ENCODE measurements at regions of chr16 and their contacts with region 1.

Region 1: GRCh38 chr16:508884-509736 is 18.4 kb upstream of the CAPN15 start:
- DNase-seq: peak; percentile 96
- ATAC-seq: peak; percentile 95
- H3K4me3 ChIP-seq: peak overlapping the region in 1 of 3 experiments; percentile 11; a peak in 1 of 6 replicates
- H3K27ac ChIP-seq: peak overlapping the region; percentile 73
- H3K4me1 ChIP-seq: peaks cover 37% of the 10 kb centered on the region
- H3K27me3 ChIP-seq: no peaks in the 10 kb centered on the region
- CTCF ChIP-seq: no peak
- EP300 ChIP-seq: peak in 1 of 2 experiments; percentile 80; a peak in 2 of 4 replicates
- POLR2A ChIP-seq: peak; percentile 35 to 62; a peak in 2 of 4 replicates
- RAD21 ChIP-seq: peak; percentile 37; the same call in 1 of the 2 replicates

Region 2: GRCh38 chr16:521381-522210 is 12.5 kb after region 1 on chr16:
- CTCF ChIA-PET with region 1: no interaction called
- POLR2A ChIA-PET with region 1: interaction called, 20 read pairs
- in situ Hi-C with region 1: no loop called
- intact Hi-C with region 1: no loop called
- DNase-seq: no peak
- ATAC-seq: no peak
- H3K4me3 ChIP-seq: no peak overlapping the region
- H3K27ac ChIP-seq: no peak overlapping the region
- H3K4me1 ChIP-seq: peaks cover 28% of the 10 kb centered on the region
- H3K27me3 ChIP-seq: no peaks in the 10 kb centered on the region; a peak in 1 of 5 replicates
- CTCF ChIP-seq: 0 out of 2 replicates have a peak, but pooled peaks have one; percentile 19
- EP300 ChIP-seq: no peak
- POLR2A ChIP-seq: 0 out of 4 replicates have a peak, but pooled peaks of 1 of the 2 experiments have one; percentile 8
- RAD21 ChIP-seq: no peak

Region 3: DNA sequence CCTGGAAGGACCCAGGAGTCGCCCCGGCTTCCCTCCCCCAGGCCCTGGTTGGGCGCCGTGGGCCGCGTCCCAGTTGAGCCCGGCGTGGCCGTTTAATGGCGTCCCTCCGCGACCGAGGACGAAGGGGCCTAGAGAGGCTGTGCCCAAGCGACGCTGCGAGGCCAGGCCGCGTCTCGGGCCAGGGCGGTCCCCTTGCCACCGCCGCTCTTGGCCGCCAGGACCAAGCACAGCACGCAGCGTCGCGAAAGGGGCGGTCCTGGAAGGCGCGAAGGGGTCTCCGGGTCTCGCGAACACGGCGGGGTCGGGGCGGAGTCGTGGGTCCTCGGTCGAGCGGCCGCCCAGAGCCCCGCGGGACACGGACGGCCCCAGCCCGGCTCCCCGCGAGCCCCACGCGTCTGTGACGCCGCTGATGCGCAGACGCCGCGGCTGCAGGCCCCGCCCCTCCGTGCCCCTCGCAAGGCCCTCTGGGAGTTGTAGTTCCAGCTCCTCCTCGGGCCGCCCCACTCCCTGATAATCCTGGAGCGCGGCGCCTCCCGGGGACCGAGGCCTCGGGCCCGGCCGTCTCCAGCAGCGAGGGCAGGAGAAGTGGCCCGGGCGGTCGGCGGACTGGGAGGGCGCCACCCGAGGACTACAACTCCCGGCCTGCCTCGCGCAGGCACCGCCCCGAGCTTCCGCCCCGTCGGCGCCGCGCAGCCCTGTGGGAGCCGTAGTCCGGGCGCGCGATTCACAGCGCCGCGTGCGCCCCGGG is 18.1 kb after region 1 on chr16 and contains the start of gene CAPN15:
- CTCF ChIA-PET with region 1: no interaction called
- POLR2A ChIA-PET with region 1: interaction called, 20 read pairs
- in situ Hi-C with region 1: no loop called
- intact Hi-C with region 1: no loop called
- DNase-seq: peak; percentile 76
- ATAC-seq: peak; percentile 76
- H3K4me3 ChIP-seq: peak within 1 kb of the TSS; percentile 92 to 96 (median 96)
- H3K27ac ChIP-seq: peak within 1 kb of the TSS; percentile 72
- H3K4me1 ChIP-seq: peaks cover 51% of the 10 kb centered on the region
- H3K27me3 ChIP-seq: no peaks in the 10 kb centered on the region; a peak in 1 of 5 replicates
- CTCF ChIP-seq: 0 out of 2 replicates have a peak, but pooled peaks have one; percentile 12
- EP300 ChIP-seq: no peak
- POLR2A ChIP-seq: peak; percentile 46 to 82
- RAD21 ChIP-seq: peak; percentile 53
- total RNA-seq, gene CAPN15: 15.0 and 24.5 TPM in 2 replicates